ENCODE measurements at regions of chr6 and their contacts with region 1.

Region 1: GRCh38 chr6:52664186-52664990 is 6.5 kb upstream of the TMEM14A start:
- DNase-seq: peak; percentile 94
- H3K4me3 Mint-ChIP-seq: no peak overlapping the region
- H3K27ac Mint-ChIP-seq: no peak overlapping the region
- H3K4me1 Mint-ChIP-seq: no peaks in the 10 kb centered on the region
- H3K27me3 Mint-ChIP-seq: no peaks in the 10 kb centered on the region
- CTCF ChIP-seq: no peak

Region 2: GRCh38 chr6:51893356-51893755 is 771.0 kb before region 1 on chr6:
- CTCF ChIA-PET with region 1: no interaction called
- POLR2A ChIA-PET with region 1: no interaction called
- intact Hi-C with region 1: no loop called
- DNase-seq: no peak
- H3K4me3 Mint-ChIP-seq: no peak overlapping the region
- H3K27ac Mint-ChIP-seq: no peak overlapping the region
- H3K4me1 Mint-ChIP-seq: no peaks in the 10 kb centered on the region
- H3K27me3 Mint-ChIP-seq: no peaks in the 10 kb centered on the region
- CTCF ChIP-seq: no peak

Region 3: DNA sequence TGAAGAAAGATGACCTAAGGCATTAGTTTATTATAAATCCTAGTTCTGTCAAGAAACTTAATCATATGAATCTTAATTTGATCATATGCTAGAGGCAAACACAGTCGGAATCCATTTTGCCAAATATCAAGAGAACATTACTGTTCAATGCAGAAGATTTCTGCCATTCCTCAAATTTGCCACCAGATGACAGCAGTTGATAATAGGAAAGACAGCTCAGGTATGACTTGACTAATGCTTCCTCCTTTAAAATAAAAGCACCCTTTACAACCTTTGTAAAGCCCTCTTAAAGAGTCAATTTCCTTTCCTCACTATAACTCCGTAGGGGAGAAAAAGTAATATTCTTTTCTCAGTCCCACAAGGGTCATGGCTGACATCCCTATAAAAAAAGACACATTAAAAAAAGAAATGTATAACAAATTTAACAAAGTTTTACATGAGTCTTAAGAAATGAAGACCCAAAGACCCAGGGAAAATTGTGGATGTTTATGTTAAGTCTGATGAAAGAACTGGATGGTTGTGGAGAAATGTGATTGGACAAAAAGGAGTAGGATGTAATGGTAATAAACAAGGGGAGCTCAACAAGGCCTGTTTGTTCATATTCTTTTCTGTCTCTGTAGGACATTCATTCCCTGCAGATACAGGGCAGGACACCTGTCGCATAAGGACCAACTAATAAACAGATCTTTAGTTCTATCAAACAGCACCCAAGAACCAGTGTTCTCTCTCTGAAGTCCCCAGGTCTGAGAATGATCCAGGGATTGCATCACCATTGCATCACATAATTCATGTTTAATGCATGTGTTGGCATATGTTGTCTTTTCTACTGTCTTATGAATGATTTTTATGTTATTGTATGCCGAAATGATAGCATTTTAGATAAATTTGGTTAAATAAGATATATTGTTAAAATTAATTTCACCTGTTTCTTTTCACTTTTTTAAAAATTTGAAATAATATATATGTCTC is 501.2 kb before region 1 on chr6:
- CTCF ChIA-PET with region 1: interaction called, 7 read pairs
- POLR2A ChIA-PET with region 1: no interaction called
- intact Hi-C with region 1: loop called (anchors 5 kb)
- DNase-seq: peak; percentile 59
- H3K4me3 Mint-ChIP-seq: no peak overlapping the region
- H3K27ac Mint-ChIP-seq: peak overlapping the region; percentile 86
- H3K4me1 Mint-ChIP-seq: peaks cover 11% of the 10 kb centered on the region
- H3K27me3 Mint-ChIP-seq: no peaks in the 10 kb centered on the region
- CTCF ChIP-seq: peak; percentile 86

Region 4: GRCh38 chr6:52399511-52400312 is 264.7 kb before region 1 on chr6:
- CTCF ChIA-PET with region 1: interaction called, 44 read pairs
- POLR2A ChIA-PET with region 1: no interaction called
- intact Hi-C with region 1: no loop called
- DNase-seq: peak; percentile 70
- H3K4me3 Mint-ChIP-seq: no peak overlapping the region
- H3K27ac Mint-ChIP-seq: no peak overlapping the region
- H3K4me1 Mint-ChIP-seq: peaks cover 10% of the 10 kb centered on the region
- H3K27me3 Mint-ChIP-seq: no peaks in the 10 kb centered on the region
- CTCF ChIP-seq: peak; percentile 73

Region 5: DNA sequence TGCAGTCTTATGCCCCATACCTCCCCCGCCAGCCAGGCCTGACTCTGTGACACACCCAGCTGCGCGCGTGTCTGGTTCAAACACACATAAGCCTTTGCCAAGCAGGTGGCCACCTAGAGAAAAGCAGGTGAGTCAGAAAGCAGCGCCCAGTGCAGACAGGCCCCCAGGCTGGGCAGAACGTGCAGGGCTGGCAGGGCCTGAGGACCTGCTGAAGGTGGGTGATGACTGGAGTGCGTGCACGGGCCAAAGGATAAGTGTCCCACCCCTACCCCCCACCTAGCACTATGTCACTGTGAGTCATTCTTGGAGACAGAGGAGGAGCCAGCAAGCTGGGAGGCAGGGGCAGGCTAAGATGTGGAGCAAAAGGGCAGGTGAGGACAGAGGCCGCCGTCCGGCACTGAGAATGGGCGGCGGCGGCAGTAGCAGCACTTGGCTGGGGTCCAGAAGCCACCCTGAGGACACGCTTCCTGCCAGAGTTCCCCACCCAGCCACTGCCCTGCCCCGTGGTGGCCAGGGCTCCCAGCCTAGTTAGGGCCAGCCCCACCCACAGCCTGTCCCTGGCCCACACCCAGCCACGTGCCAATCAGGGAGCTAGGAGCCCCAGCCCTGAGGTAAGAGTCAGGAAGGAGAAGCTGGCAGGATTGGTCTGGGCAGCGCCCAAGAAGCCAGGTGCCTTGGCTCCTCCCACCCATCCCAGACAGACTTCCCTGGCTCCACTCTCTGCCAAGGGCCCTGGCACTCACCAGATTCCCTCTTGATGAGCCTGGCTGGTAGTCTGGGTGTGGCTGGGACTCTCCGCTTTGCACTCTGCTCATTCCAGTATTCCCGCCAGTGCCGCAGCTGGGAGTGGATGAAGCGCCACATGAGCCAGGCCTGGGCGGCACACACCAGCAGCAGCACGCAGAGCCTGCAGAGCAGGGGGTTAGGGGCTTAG is 160.3 kb before region 1 on chr6:
- CTCF ChIA-PET with region 1: no interaction called
- POLR2A ChIA-PET with region 1: no interaction called
- intact Hi-C with region 1: loop called (anchors 5 kb)
- DNase-seq: peak; percentile 99
- H3K4me3 Mint-ChIP-seq: peak overlapping the region; percentile 28
- H3K27ac Mint-ChIP-seq: peak overlapping the region; percentile 61
- H3K4me1 Mint-ChIP-seq: peaks cover 34% of the 10 kb centered on the region
- H3K27me3 Mint-ChIP-seq: no peaks in the 10 kb centered on the region
- CTCF ChIP-seq: no peak

Region 6: DNA sequence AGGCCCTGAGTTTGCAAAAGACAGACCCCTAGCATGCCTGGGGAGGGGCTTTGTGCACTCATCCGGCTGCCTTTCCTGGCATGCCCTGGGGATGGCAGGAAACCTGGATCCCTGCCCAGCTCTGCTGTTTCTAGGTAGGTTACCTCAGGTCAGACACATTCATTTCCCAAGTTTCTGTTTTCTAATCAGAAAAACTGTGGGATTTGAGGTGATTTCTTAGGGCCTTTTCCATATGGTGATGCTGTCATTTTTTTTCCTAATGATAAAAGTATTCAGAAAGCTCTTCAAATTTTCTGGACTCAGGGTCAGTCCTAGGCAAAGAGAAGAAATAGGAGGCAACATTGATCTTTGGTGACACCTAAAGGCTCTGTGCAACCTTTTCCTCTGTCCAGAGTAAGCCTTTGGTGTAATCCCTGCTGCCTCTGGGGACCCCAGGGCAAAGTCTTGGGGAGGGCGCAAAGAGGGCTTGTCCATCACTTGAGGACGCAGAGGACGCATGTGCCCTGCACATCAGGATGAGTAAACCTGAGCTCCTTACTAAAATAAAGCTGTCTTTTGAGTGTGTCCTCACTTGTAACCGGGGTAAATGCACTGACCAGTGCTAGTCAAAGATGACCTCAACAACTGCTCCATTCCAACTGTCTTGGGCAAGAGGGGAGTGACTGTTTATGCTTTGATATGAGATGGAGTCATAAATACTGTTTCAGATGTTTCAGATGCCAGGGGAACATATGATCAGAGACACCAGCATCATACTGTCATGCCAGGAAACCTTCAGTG is 74.0 kb before region 1 on chr6:
- CTCF ChIA-PET with region 1: interaction called, 11 read pairs
- POLR2A ChIA-PET with region 1: no interaction called
- intact Hi-C with region 1: loop called (anchors 5 kb)
- DNase-seq: peak; percentile 68
- H3K4me3 Mint-ChIP-seq: no peak overlapping the region
- H3K27ac Mint-ChIP-seq: no peak overlapping the region
- H3K4me1 Mint-ChIP-seq: peaks cover 19% of the 10 kb centered on the region
- H3K27me3 Mint-ChIP-seq: no peaks in the 10 kb centered on the region
- CTCF ChIP-seq: peak; percentile 11

Region 7: GRCh38 chr6:52647199-52647598 is 17.2 kb before region 1 on chr6:
- CTCF ChIA-PET with region 1: interaction called, 52 read pairs
- POLR2A ChIA-PET with region 1: interaction called, 4 read pairs
- intact Hi-C with region 1: no loop called
- DNase-seq: peak; percentile 22
- H3K4me3 Mint-ChIP-seq: no peak overlapping the region
- H3K27ac Mint-ChIP-seq: no peak overlapping the region
- H3K4me1 Mint-ChIP-seq: peaks cover 9% of the 10 kb centered on the region
- H3K27me3 Mint-ChIP-seq: peaks cover 24% of the 10 kb centered on the region
- CTCF ChIP-seq: no peak

Region 8: GRCh38 chr6:52984247-52984646 is 319.9 kb after region 1 on chr6:
- CTCF ChIA-PET with region 1: no interaction called
- POLR2A ChIA-PET with region 1: no interaction called
- intact Hi-C with region 1: no loop called
- DNase-seq: no peak
- H3K4me3 Mint-ChIP-seq: no peak overlapping the region
- H3K27ac Mint-ChIP-seq: no peak overlapping the region
- H3K4me1 Mint-ChIP-seq: no peaks in the 10 kb centered on the region
- H3K27me3 Mint-ChIP-seq: no peaks in the 10 kb centered on the region
- CTCF ChIP-seq: no peak

Measured in MCF 10A (cell line).